Right cardiac atrium (tissue), 5 donors: ENCODE measurements at regions of chr13 and their contacts with region 1.

Region 1: GRCh38 chr13:45370922-45371406 is 30.0 kb upstream of the TPT1 start:
- DNase-seq: peak; percentile 76 to 90 (median 89)
- ATAC-seq: peak; percentile 82 to 90
- H3K4me3 ChIP-seq: no peak overlapping the region
- H3K27ac ChIP-seq: no peak overlapping the region
- H3K4me1 ChIP-seq: no peaks in the 10 kb centered on the region
- H3K27me3 ChIP-seq: no peaks in the 10 kb centered on the region

Region 2: GRCh38 chr13:45473627-45474026 is 102.7 kb after region 1 on chr13:
- intact Hi-C with region 1: loop called in 2 of 4 experiments (anchors 10 kb)
- DNase-seq: no peak
- ATAC-seq: no peak
- H3K4me3 ChIP-seq: no peak overlapping the region
- H3K27ac ChIP-seq: no peak overlapping the region
- H3K4me1 ChIP-seq: no peaks in the 10 kb centered on the region
- H3K27me3 ChIP-seq: no peaks in the 10 kb centered on the region

Region 3: GRCh38 chr13:45691236-45691635 is 320.3 kb after region 1 on chr13:
- intact Hi-C with region 1: no loop called
- DNase-seq: no peak
- ATAC-seq: no peak
- H3K4me3 ChIP-seq: no peak overlapping the region
- H3K27ac ChIP-seq: no peak overlapping the region
- H3K4me1 ChIP-seq: no peaks in the 10 kb centered on the region
- H3K27me3 ChIP-seq: peaks cover 2% of the 10 kb centered on the region